ENCODE measurements at regions of chr3 and their contacts with region 1.

Region 1: GRCh38 chr3:12948891-12949711 is 107.7 kb upstream of the RPL32 start:
- DNase-seq: no peak
- H3K4me3 Mint-ChIP-seq: no peak overlapping the region
- H3K27ac Mint-ChIP-seq: peak overlapping the region; percentile 80
- H3K4me1 Mint-ChIP-seq: peaks cover 28% of the 10 kb centered on the region
- H3K27me3 Mint-ChIP-seq: no peaks in the 10 kb centered on the region

Region 2: DNA sequence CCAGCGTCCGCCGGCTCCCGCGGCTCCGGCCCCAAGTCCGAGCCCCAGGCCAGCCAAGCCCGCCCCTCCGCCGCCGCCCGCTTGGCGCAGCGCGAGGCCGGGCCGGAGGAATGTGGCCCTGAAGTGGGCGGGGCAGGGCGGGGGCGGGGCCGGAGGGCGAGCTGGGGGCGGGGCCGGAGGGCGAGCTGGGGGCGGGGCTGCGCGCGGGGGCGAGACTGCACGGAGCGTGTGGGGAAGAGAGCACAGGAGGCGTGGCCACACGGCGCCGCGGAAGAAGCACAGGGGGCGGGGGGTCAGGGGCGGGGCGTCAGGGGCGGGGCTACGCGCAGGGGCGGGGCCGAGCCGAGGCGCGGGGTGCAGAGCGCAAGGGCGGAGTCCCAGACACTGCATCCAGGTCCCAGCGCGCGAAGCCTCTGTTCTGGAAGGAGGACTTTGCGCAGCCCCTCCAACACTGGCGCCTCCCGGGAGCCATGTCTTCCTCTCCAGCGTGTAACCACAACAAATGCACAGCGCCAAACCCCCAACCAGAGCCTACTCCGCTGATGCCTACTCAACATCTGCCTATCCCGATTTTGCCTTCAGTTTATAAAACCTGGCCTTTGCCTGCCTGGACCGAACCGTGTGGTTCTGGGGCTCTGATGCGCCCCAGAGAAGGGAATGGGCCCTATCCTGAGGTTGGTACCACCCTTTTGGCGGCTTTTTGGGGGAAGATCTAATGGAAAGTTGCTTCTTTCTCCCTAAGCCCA is 18.7 kb after region 1 on chr3:
- intact Hi-C with region 1: loop called (anchors 1 kb)
- DNase-seq: peak; percentile 85
- H3K4me3 Mint-ChIP-seq: peak overlapping the region; percentile 63
- H3K27ac Mint-ChIP-seq: no peak overlapping the region
- H3K4me1 Mint-ChIP-seq: peaks cover 37% of the 10 kb centered on the region
- H3K27me3 Mint-ChIP-seq: no peaks in the 10 kb centered on the region

Region 3: GRCh38 chr3:13495921-13496723 is 547.0 kb after region 1 on chr3:
- intact Hi-C with region 1: no loop called
- DNase-seq: peak; percentile 60
- H3K4me3 Mint-ChIP-seq: no peak overlapping the region
- H3K27ac Mint-ChIP-seq: no peak overlapping the region
- H3K4me1 Mint-ChIP-seq: peaks cover 2% of the 10 kb centered on the region
- H3K27me3 Mint-ChIP-seq: no peaks in the 10 kb centered on the region